ENCODE measurements at regions of chr7 and their contacts with region 1.

Region 1: DNA sequence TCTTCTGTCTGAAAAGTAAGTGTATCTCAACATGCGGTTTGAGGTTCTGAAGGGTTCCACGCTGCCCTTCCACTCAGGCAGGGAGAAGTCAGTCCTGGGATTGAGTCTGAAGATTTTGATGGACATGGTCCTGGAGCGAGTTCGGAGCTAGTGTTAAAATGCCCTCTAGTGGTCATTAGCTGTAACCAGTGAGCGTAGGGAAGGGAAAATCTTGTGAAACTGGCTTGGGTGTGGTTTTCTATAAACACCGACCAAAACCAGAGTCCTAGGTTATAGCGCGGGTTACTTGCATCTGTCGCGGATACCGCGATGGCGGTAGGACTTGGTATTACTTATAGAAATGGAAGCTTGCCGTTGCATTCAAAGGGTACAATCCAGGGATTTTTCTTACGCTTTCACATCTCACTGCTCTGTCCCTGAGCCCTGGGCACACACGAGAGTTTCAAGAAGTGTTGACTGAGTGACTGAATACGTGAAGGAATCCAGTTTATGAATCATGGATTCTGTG is 348.2 kb upstream of the C7orf33 start:
- DNase-seq: peak in 1 of 2 experiments; percentile 19
- H3K4me3 ChIP-seq: peak overlapping the region in 1 of 4 experiments; percentile 19; a peak in 1 of 8 replicates
- H3K27ac ChIP-seq: no peak overlapping the region
- H3K4me1 ChIP-seq: no peaks in the 10 kb centered on the region
- H3K27me3 ChIP-seq: no peaks in the 10 kb centered on the region
- CTCF ChIP-seq: peak; percentile 16 to 94 (median 86)
- EP300 ChIP-seq: no peak
- POLR2A ChIP-seq: no peak
- RAD21 ChIP-seq: peak; percentile 86 to 93

Region 2: GRCh38 chr7:148095066-148095465 is 147.3 kb before region 1 on chr7:
- CTCF ChIA-PET with region 1: interaction called, 10 read pairs
- POLR2A ChIA-PET with region 1: no interaction called
- DNase-seq: no peak
- H3K4me3 ChIP-seq: no peak overlapping the region
- H3K27ac ChIP-seq: no peak overlapping the region
- H3K4me1 ChIP-seq: no peaks in the 10 kb centered on the region; a peak in 1 of 7 replicates
- H3K27me3 ChIP-seq: no peaks in the 10 kb centered on the region
- CTCF ChIP-seq: no peak
- EP300 ChIP-seq: no peak
- POLR2A ChIP-seq: no peak
- RAD21 ChIP-seq: no peak

Region 3: GRCh38 chr7:148142660-148143248 is 99.6 kb before region 1 on chr7:
- CTCF ChIA-PET with region 1: interaction called, 18 read pairs
- POLR2A ChIA-PET with region 1: no interaction called
- DNase-seq: no peak
- H3K4me3 ChIP-seq: no peak overlapping the region
- H3K27ac ChIP-seq: no peak overlapping the region
- H3K4me1 ChIP-seq: no peaks in the 10 kb centered on the region
- H3K27me3 ChIP-seq: no peaks in the 10 kb centered on the region
- CTCF ChIP-seq: peak in 2 of 3 experiments; percentile 62 to 75; a peak in 3 of 4 replicates
- EP300 ChIP-seq: no peak
- POLR2A ChIP-seq: no peak
- RAD21 ChIP-seq: peak; percentile 81 to 85

Region 4: DNA sequence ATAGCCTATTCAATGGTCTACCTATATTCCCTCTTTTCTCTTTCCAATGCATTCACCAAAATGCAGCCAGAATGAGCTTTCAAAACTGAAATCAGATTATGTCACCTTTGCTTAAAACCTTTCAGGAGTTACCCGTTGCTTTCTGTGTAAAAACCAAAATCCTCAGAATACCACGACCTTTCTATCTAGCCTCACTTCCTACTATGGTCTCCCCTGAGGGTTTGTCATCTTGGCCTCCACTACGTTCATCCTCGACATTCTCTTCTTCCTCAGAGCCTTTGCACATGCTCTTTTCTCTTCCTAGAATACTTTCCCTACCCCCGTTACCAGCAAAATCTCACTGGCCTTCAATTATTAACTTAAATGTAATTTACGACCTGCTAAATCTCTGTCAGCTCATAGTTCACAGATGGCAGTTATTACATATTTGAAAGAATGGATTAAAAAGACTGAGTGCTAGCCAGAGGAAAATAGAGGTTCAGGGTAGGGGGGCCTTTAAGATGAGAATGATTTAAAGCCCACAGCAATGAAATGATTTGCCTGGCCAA is 32.6 kb before region 1 on chr7:
- CTCF ChIA-PET with region 1: interaction called, 12 read pairs
- POLR2A ChIA-PET with region 1: no interaction called
- DNase-seq: no peak
- H3K4me3 ChIP-seq: no peak overlapping the region
- H3K27ac ChIP-seq: no peak overlapping the region
- H3K4me1 ChIP-seq: no peaks in the 10 kb centered on the region
- H3K27me3 ChIP-seq: no peaks in the 10 kb centered on the region
- CTCF ChIP-seq: no peak
- EP300 ChIP-seq: no peak
- POLR2A ChIP-seq: no peak
- RAD21 ChIP-seq: no peak

Region 5: GRCh38 chr7:148262721-148263229 is 20.4 kb after region 1 on chr7:
- CTCF ChIA-PET with region 1: interaction called, 28 read pairs
- POLR2A ChIA-PET with region 1: no interaction called
- DNase-seq: peak; percentile 64 to 98
- H3K4me3 ChIP-seq: no peak overlapping the region
- H3K27ac ChIP-seq: no peak overlapping the region
- H3K4me1 ChIP-seq: peaks cover 0 to 3% (median 0%) of the 10 kb centered on the region in 4 experiments; a peak in 1 of 7 replicates
- H3K27me3 ChIP-seq: no peaks in the 10 kb centered on the region
- CTCF ChIP-seq: peak; percentile 85 to 97 (median 97)
- EP300 ChIP-seq: no peak
- POLR2A ChIP-seq: no peak
- RAD21 ChIP-seq: peak; percentile 93